CD8-positive, alpha-beta T cell (primary cell): ENCODE measurements at regions of chr10 and their contacts with region 1.

Region 1: GRCh38 chr10:43105102-43105785 is 28.4 kb downstream of the RET start:
- DNase-seq: peak; percentile 54 to 87 (median 71)
- ATAC-seq: peak; percentile 96
- H3K4me3 ChIP-seq: peak overlapping the region; percentile 56 to 72
- H3K4me3 Mint-ChIP-seq: peak overlapping the region; percentile 80
- H3K27ac ChIP-seq: no peak overlapping the region
- H3K27ac Mint-ChIP-seq: no peak overlapping the region
- H3K4me1 ChIP-seq: peaks cover 13% of the 10 kb centered on the region
- H3K4me1 Mint-ChIP-seq: peaks cover 8% of the 10 kb centered on the region
- H3K27me3 ChIP-seq: peaks cover 0 to 10% of the 10 kb centered on the region in 2 experiments
- H3K27me3 Mint-ChIP-seq: peaks cover 17% of the 10 kb centered on the region
- CTCF ChIP-seq: peak; percentile 98

Region 2: GRCh38 chr10:42753126-42753506 is 352.1 kb before region 1 on chr10:
- CTCF ChIA-PET with region 1: interaction called, 11 read pairs
- POLR2A ChIA-PET with region 1: no interaction called
- intact Hi-C with region 1: loop called in 1 of 2 experiments (anchors 1 kb)
- DNase-seq: peak; percentile 28 to 79 (median 62)
- ATAC-seq: peak; percentile 63
- H3K4me3 ChIP-seq: peak overlapping the region; percentile 47 to 71
- H3K4me3 Mint-ChIP-seq: peak overlapping the region; percentile 82
- H3K27ac ChIP-seq: no peak overlapping the region
- H3K27ac Mint-ChIP-seq: no peak overlapping the region
- H3K4me1 ChIP-seq: peaks cover 14% of the 10 kb centered on the region
- H3K4me1 Mint-ChIP-seq: peaks cover 6% of the 10 kb centered on the region
- H3K27me3 ChIP-seq: peaks cover 32 to 35% of the 10 kb centered on the region in 2 experiments
- H3K27me3 Mint-ChIP-seq: peaks cover 55% of the 10 kb centered on the region
- CTCF ChIP-seq: peak; percentile 62

Region 3: DNA sequence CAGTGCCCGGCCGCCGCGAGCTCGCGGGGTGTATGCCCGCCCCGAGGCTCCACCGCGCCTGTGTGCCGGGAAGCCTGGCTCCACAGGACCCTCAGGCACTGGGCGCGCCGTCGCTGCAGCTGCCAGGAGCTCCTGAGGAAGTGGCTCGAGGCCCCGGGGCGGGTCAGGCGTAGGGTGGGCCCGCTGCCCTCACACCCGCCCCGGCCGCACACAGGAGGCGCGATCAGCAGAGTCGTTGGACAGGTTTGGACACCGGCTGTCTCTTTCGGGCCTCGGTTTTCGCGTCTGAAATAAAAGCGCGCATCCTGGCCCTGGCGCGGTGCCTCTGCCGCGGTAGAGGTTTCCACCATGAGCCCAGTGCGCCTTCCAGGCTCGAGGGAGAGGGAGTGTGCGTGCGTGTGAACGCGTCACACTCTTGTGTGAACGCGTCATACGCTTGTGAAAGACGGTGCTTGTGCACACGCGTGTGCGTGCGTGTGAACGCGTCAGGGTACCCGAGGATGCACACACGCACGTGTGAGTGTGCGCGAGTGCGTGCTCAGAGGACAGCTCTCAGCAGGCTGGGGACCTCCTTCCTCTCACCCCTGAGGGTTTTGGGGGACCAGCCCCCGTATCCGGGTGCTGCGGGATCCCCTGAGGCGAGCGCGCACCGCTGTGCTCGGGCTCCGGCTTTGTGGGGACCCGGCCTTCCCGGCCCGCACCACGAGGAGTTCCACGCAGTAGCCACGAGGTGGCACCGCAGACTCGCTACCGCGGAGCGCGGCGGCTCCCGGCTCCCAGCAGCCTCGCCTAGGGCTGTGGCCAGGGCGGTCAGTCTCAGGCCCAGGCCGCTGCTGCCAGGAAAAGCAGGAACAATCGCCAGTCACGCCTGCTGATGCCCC is 238.9 kb before region 1 on chr10:
- CTCF ChIA-PET with region 1: interaction called, 4 read pairs
- POLR2A ChIA-PET with region 1: no interaction called
- intact Hi-C with region 1: loop called in 1 of 2 experiments (anchors 1 kb)
- DNase-seq: peak in 8 of 9 experiments; percentile 15 to 67 (median 44)
- ATAC-seq: peak; percentile 40
- H3K4me3 ChIP-seq: peak overlapping the region in 1 of 2 experiments; percentile 15
- H3K4me3 Mint-ChIP-seq: no peak overlapping the region
- H3K27ac ChIP-seq: no peak overlapping the region
- H3K27ac Mint-ChIP-seq: no peak overlapping the region
- H3K4me1 ChIP-seq: no peaks in the 10 kb centered on the region
- H3K4me1 Mint-ChIP-seq: peaks cover 6% of the 10 kb centered on the region
- H3K27me3 ChIP-seq: peaks cover 0 to 2% of the 10 kb centered on the region in 2 experiments
- H3K27me3 Mint-ChIP-seq: peaks cover 32% of the 10 kb centered on the region
- CTCF ChIP-seq: peak; percentile 29